ENCODE measurements at regions of chr16 and their contacts with region 1.

Region 1: DNA sequence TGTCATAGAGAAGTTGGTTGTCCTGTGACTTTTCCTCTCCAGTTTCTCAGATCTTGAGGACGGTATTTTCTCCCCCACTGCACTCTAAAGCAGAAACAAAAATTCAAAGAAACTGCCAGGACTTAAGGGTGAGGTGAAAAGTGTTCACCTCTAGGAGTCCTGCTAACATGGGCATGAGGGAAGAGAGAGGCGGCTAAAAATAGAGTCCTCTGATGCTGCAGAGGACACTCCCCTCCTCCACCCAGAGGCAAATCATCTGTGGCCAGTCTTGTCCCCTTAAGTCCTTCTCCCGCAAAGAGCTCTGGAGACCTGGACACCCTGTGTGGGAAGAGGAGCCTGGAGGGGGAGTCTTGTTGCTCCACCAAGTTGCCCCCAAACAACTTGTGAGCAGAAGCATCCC is 4.7 kb upstream of the DDX19A start:
- DNase-seq: no peak
- H3K4me3 ChIP-seq: no peak overlapping the region
- H3K27ac ChIP-seq: no peak overlapping the region
- H3K4me1 ChIP-seq: peaks cover 0 to 3% of the 10 kb centered on the region in 2 donors
- H3K27me3 ChIP-seq: no peaks in the 10 kb centered on the region
- CTCF ChIP-seq: no peak

Region 2: GRCh38 chr16:69179328-69180010 is 1162.5 kb before region 1 on chr16:
- intact Hi-C with region 1: loop called (anchors 10 kb)
- DNase-seq: peak in 1 of 2 donors; percentile 89
- H3K4me3 ChIP-seq: no peak overlapping the region
- H3K27ac ChIP-seq: peak overlapping the region; percentile 73 to 79
- H3K4me1 ChIP-seq: peaks cover 5 to 37% of the 10 kb centered on the region in 2 donors
- H3K27me3 ChIP-seq: no peaks in the 10 kb centered on the region
- CTCF ChIP-seq: no peak

Region 3: GRCh38 chr16:70298988-70299938 is 42.8 kb before region 1 on chr16 and contains the start of gene DDX19B:
- intact Hi-C with region 1: loop called (anchors 2 kb)
- DNase-seq: peak; percentile 31 to 89
- H3K4me3 ChIP-seq: peak within 1 kb of the TSS; percentile 81 to 86
- H3K27ac ChIP-seq: peak within 1 kb of the TSS; percentile 95 to 99
- H3K4me1 ChIP-seq: peaks cover 0 to 7% of the 10 kb centered on the region in 2 donors
- H3K27me3 ChIP-seq: no peaks in the 10 kb centered on the region
- CTCF ChIP-seq: peak in 1 of 3 experiments; percentile 3
- total RNA-seq, gene DDX19B: 24.2 TPM

Region 4: DNA sequence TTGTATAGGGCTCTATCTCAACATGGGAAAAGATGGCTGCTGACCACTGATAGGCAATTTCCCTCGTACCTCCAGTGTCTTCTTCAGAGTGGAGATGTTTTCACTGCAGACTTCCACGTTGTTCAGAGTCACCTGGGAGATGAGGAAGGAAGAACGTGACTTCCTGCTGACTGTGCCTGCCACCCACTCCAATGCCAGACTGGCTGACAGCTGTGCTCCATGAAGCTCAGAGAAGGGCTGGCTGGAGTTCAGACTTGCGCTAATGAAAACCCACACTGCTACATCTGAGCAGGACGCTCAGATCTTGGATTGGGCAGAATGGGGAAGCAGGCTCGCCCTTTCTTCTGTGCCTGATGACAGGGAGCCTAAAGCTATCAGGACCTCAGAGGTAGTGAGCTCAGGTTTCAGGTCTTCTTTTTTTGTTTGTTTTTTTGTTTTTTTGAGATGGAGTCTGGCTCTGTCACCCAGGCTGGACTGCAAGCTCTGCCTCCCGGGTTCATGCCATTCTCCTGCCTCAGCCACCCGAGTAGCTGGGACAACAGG is 148.3 kb after region 1 on chr16:
- intact Hi-C with region 1: no loop called
- DNase-seq: no peak
- H3K4me3 ChIP-seq: no peak overlapping the region
- H3K27ac ChIP-seq: no peak overlapping the region
- H3K4me1 ChIP-seq: no peaks in the 10 kb centered on the region
- H3K27me3 ChIP-seq: no peaks in the 10 kb centered on the region
- CTCF ChIP-seq: no peak

Measured in ascending aorta (tissue), 2 donors.